Naive thymus-derived CD4-positive, alpha-beta T cell (primary cell): ENCODE measurements at regions of chr2 and their contacts with region 1.

Region 1: GRCh38 chr2:151828143-151828889 is at the start of gene ARL5A:
- DNase-seq: peak; percentile 89 to 98 (median 96)
- ATAC-seq: peak; percentile 97
- H3K4me3 ChIP-seq: peak within 1 kb of the TSS; percentile 93
- H3K4me3 Mint-ChIP-seq: peak within 1 kb of the TSS; percentile 84 to 97 (median 92)
- H3K27ac ChIP-seq: peak within 1 kb of the TSS; percentile 87
- H3K27ac Mint-ChIP-seq: peak within 1 kb of the TSS; percentile 90 to 96 (median 92)
- H3K4me1 ChIP-seq: peaks cover 18 to 26% of the 10 kb centered on the region in 2 donors
- H3K4me1 Mint-ChIP-seq: peaks cover 30 to 52% (median 40%) of the 10 kb centered on the region in 7 donors
- H3K27me3 ChIP-seq: no peaks in the 10 kb centered on the region
- H3K27me3 Mint-ChIP-seq: peaks cover 0 to 6% (median 0%) of the 10 kb centered on the region in 5 donors
- total RNA-seq, gene ARL5A: 25.8 to 43.3 (median 32.3) TPM

Region 2: GRCh38 chr2:151289369-151290088 is 538.8 kb before region 1 on chr2 and contains the start of gene NMI:
- CTCF ChIA-PET with region 1: no interaction called
- POLR2A ChIA-PET with region 1: interaction called, 3 read pairs
- intact Hi-C with region 1: loop called (anchors 2 kb)
- DNase-seq: peak; percentile 47 to 84 (median 80)
- ATAC-seq: peak; percentile 79
- H3K4me3 ChIP-seq: peak within 1 kb of the TSS; percentile 76
- H3K4me3 Mint-ChIP-seq: peak within 1 kb of the TSS; percentile 85 to 99 (median 95)
- H3K27ac ChIP-seq: peak within 1 kb of the TSS; percentile 92
- H3K27ac Mint-ChIP-seq: peak within 1 kb of the TSS; percentile 94 to 100 (median 97)
- H3K4me1 ChIP-seq: peaks cover 18 to 22% of the 10 kb centered on the region in 2 donors
- H3K4me1 Mint-ChIP-seq: peaks cover 33 to 66% (median 48%) of the 10 kb centered on the region in 7 donors
- H3K27me3 ChIP-seq: no peaks in the 10 kb centered on the region
- H3K27me3 Mint-ChIP-seq: no peaks in the 10 kb centered on the region
- total RNA-seq, gene NMI: 14.9 to 69.9 (median 29.3) TPM

Region 3: DNA sequence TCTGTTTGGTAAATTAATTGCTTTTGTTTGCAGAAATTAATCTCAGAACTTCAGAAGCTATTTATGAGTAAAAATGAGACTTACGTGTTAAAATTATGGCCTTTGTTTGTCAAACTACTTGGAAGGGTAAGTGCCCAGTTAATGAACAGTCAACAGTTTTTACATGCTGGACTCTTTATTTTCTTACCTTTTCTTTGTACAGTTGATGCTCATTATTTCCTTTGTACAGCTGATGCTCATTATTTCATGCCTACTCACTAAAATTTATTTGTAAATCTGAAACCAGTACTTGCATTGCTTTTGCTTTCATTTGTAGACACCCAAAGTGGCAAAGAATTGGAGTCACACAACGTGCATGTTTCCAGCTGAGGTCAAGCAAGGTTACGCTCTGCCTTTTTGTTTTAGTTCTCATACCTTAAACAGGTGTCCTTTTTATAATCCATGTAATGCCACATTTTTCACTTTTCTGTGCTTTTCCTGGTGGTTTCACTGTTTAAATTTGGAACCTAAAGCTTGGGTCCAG is 405.3 kb before region 1 on chr2:
- CTCF ChIA-PET with region 1: no interaction called
- POLR2A ChIA-PET with region 1: no interaction called
- intact Hi-C with region 1: loop called in 1 of 2 experiments (anchors 10 kb)
- DNase-seq: no peak
- ATAC-seq: no peak
- H3K4me3 ChIP-seq: no peak overlapping the region
- H3K4me3 Mint-ChIP-seq: peak overlapping the region in 5 of 10 donors; percentile 45 to 63 (median 59)
- H3K27ac ChIP-seq: peak overlapping the region; percentile 53
- H3K27ac Mint-ChIP-seq: peak overlapping the region; percentile 51 to 98 (median 91)
- H3K4me1 ChIP-seq: peaks cover 17 to 20% of the 10 kb centered on the region in 2 donors
- H3K4me1 Mint-ChIP-seq: peaks cover 14 to 49% (median 44%) of the 10 kb centered on the region in 7 donors
- H3K27me3 ChIP-seq: no peaks in the 10 kb centered on the region
- H3K27me3 Mint-ChIP-seq: no peaks in the 10 kb centered on the region

Region 4: GRCh38 chr2:151808258-151809072 is 19.9 kb before region 1 on chr2:
- CTCF ChIA-PET with region 1: interaction called, 3 read pairs
- POLR2A ChIA-PET with region 1: no interaction called
- intact Hi-C with region 1: loop called (anchors 1 to 2 kb)
- DNase-seq: peak in 5 of 9 donors; percentile 25 to 50 (median 41)
- ATAC-seq: peak; percentile 87
- H3K4me3 ChIP-seq: no peak overlapping the region
- H3K4me3 Mint-ChIP-seq: peak overlapping the region in 1 of 10 donors; percentile 49
- H3K27ac ChIP-seq: no peak overlapping the region
- H3K27ac Mint-ChIP-seq: peak overlapping the region in 2 of 9 donors; percentile 3 to 32
- H3K4me1 ChIP-seq: peaks cover 0 to 8% of the 10 kb centered on the region in 2 donors
- H3K4me1 Mint-ChIP-seq: peaks cover 0 to 10% (median 5%) of the 10 kb centered on the region in 7 donors
- H3K27me3 ChIP-seq: no peaks in the 10 kb centered on the region
- H3K27me3 Mint-ChIP-seq: no peaks in the 10 kb centered on the region

Region 5: GRCh38 chr2:152025678-152026287 is 197.5 kb after region 1 on chr2:
- CTCF ChIA-PET with region 1: no interaction called
- POLR2A ChIA-PET with region 1: no interaction called
- intact Hi-C with region 1: loop called in 1 of 2 experiments (anchors 10 kb)
- DNase-seq: peak; percentile 50 to 81 (median 76)
- ATAC-seq: peak; percentile 94
- H3K4me3 ChIP-seq: peak overlapping the region; percentile 54
- H3K4me3 Mint-ChIP-seq: peak overlapping the region; percentile 3 to 95 (median 82)
- H3K27ac ChIP-seq: no peak overlapping the region
- H3K27ac Mint-ChIP-seq: peak overlapping the region in 4 of 9 donors; percentile 13 to 58 (median 24)
- H3K4me1 ChIP-seq: no peaks in the 10 kb centered on the region
- H3K4me1 Mint-ChIP-seq: peaks cover 0 to 12% (median 10%) of the 10 kb centered on the region in 7 donors
- H3K27me3 ChIP-seq: no peaks in the 10 kb centered on the region
- H3K27me3 Mint-ChIP-seq: peaks cover 0 to 14% (median 0%) of the 10 kb centered on the region in 5 donors